HCT116 (cell line): ENCODE measurements at regions of chr4 and their contacts with region 1.

Region 1: DNA sequence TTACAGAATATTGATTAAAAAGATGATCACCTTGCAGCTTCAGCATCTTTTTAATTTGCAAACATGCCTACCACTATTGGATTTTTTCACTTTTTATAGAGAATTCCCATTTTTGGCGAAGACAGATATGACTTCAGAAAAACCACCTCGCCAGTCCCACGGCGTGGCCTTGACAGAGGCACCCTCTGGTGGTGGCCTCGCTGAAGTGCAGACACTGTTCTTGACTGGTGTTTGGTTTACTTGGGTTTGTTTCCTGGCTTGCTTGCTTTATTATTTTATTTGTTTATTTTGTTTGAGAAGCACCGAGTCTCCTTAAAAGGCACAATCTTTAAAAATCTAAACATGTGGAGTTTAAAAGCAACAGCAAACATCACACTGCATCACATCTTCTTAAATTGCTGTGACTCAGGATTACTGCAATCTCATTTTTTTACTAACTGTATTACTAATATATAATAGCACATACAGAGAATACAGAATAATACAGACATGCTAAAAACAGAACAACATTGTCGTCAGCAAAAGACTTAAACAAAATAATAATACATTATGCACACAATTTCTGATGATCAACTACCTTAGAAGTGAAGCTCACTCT is 13.1 kb upstream of the AMTN start:
- DNase-seq: peak; percentile 42
- ATAC-seq: peak; percentile 93
- H3K4me3 ChIP-seq: no peak overlapping the region
- H3K27ac ChIP-seq: no peak overlapping the region
- H3K4me1 ChIP-seq: no peaks in the 10 kb centered on the region
- H3K27me3 ChIP-seq: no peaks in the 10 kb centered on the region
- CTCF ChIP-seq: peak; percentile 63 to 97 (median 97)
- POLR2A ChIP-seq: no peak
- RAD21 ChIP-seq: peak; percentile 87

Region 2: DNA sequence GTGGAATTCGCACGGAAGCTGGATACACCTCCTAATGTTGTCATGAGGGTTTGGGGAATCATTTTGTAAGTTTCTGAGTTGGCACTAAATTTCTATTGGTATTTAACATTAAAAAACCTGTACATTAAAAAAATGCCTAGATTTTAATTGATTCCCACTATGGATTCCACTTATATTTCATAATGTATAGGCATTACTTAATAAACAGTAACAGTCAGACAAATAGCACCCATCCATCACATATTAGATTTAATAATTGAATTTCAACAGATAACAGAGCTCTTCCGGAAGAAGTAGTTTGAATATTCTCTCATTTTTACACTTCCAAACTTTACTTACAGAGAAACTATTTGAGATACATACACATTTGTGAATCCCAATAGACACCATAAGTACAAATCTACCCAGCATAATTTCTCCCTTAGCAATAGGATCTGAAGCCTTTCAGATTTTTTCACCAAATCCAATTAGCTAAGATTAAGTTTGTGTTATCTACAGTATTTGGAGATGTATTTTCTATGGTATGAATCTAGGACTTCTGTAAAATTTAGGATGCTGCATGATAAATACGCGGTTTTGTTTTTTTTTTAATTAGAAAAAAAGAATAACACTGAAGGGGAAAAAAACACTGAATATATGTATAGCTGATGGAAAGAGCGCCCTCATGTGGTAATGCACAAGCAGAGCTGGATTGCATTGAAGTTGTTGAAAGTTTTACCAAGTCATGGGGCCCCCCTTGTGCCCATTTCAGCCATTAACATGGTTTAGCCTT is 321.9 kb before region 1 on chr4:
- CTCF ChIA-PET with region 1: no interaction called
- POLR2A ChIA-PET with region 1: no interaction called
- RAD21 ChIA-PET with region 1: no interaction called
- intact Hi-C with region 1: loop called (anchors 10 kb)
- DNase-seq: peak; percentile 65
- ATAC-seq: peak; percentile 93
- H3K4me3 ChIP-seq: no peak overlapping the region
- H3K27ac ChIP-seq: no peak overlapping the region
- H3K4me1 ChIP-seq: no peaks in the 10 kb centered on the region
- H3K27me3 ChIP-seq: no peaks in the 10 kb centered on the region
- CTCF ChIP-seq: peak; percentile 78 to 88 (median 87)
- POLR2A ChIP-seq: no peak
- RAD21 ChIP-seq: peak; percentile 76

Region 3: GRCh38 chr4:70315928-70316327 is 189.3 kb before region 1 on chr4:
- CTCF ChIA-PET with region 1: no interaction called
- POLR2A ChIA-PET with region 1: no interaction called
- RAD21 ChIA-PET with region 1: no interaction called
- intact Hi-C with region 1: loop called (anchors 5 kb)
- DNase-seq: peak; percentile 0
- ATAC-seq: no peak
- H3K4me3 ChIP-seq: no peak overlapping the region
- H3K27ac ChIP-seq: no peak overlapping the region
- H3K4me1 ChIP-seq: no peaks in the 10 kb centered on the region
- H3K27me3 ChIP-seq: no peaks in the 10 kb centered on the region
- CTCF ChIP-seq: 0 out of 6 replicates have a peak, but pooled peaks of 1 of the 3 experiments have one; percentile 8
- POLR2A ChIP-seq: no peak
- RAD21 ChIP-seq: peak; percentile 28; the same call in 1 of the 2 replicates

Region 4: DNA sequence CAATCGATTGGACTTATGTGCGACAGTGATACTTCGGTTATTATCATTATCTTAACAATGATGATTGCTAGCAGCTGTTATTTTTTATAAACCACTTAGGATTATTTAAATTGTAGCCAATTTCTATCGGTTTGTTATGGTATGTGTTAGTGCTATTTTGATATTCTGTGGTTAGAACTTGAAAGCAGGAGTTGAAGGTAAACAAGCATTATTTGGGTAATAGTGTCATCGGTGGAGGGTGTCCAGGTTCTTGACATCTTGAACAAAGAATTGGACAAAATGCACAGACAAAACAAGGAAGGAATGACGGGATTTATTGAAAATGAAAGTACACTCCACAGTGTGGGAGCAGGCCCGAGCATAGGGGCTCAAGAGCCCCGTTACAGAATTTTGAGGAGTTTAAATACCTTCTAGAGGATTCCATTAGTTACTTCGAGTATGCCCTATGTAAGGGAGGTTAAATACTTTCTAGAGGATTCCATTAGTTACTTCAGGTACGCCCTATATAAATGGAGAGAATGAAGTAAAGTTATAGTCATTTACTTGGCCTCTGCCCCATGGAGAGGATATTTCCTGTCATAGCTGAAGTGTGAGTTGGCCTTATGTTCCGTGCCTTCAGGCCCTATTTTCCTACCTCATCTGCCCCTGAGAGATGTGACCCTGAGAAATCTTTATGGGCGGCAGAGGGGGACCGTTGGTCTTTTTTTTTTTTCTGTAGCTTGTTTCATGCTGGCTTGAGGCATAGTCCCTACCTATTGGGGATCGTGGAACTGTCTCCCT is 410.0 kb after region 1 on chr4:
- CTCF ChIA-PET with region 1: no interaction called
- POLR2A ChIA-PET with region 1: no interaction called
- RAD21 ChIA-PET with region 1: no interaction called
- intact Hi-C with region 1: no loop called
- DNase-seq: no peak
- ATAC-seq: no peak
- H3K4me3 ChIP-seq: no peak overlapping the region
- H3K27ac ChIP-seq: no peak overlapping the region
- H3K4me1 ChIP-seq: no peaks in the 10 kb centered on the region
- H3K27me3 ChIP-seq: no peaks in the 10 kb centered on the region
- CTCF ChIP-seq: no peak
- POLR2A ChIP-seq: no peak
- RAD21 ChIP-seq: no peak